ENCODE measurements at regions of chr3 and their contacts with region 1.

Region 1: DNA sequence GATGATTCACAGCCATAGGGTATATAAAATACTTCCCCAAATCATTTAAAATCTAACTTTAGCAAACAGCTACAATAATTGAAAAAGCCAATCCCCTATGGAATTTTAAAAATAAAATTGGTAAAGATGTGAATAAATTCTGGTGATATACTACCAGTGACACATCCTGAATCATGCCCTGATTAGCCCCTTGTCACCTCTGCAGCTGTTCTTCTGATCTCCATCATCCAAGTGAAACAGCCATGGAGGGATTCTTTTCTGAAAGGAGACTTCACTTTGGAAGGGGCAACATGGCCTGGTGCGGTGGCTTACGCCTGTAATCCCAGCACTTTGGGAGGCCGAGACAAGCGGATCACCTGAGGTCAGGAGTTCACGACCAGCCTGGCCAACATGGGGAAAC is 115.6 kb upstream of the MLF1 start:
- DNase-seq: no peak
- H3K4me3 ChIP-seq: no peak overlapping the region
- H3K4me3 Mint-ChIP-seq: no peak overlapping the region
- H3K27ac ChIP-seq: no peak overlapping the region
- H3K27ac Mint-ChIP-seq: no peak overlapping the region
- H3K4me1 ChIP-seq: no peaks in the 10 kb centered on the region
- H3K4me1 Mint-ChIP-seq: no peaks in the 10 kb centered on the region
- H3K27me3 ChIP-seq: no peaks in the 10 kb centered on the region
- H3K27me3 Mint-ChIP-seq: no peaks in the 10 kb centered on the region

Region 2: DNA sequence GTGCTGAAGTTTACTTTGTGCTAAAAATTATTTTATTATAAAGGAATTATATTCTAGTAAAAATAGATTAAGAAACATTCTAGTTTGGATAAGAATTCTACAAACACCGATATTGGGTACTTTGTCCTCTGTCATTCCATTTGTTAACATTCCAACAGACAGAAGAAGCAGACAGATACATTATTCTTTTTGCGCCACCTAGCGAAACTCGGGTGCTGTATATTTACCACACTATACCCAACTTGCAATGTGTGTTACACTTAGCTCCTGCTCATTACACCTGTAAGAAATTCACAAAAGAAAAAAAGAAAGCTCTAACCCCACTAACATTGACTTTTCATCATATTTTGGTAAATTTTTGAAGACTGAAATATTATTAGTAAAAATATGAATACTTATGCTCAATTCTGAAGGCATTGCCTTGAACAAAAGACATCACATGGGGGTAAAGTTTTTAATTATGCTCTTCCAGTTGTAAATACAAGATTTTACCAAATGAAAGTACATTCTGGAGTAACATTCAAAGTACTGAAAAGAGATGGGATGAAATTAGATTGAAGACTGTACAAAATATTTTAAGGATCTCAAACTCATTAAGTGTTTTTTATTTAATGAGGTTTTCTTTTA is 20.9 kb before region 1 on chr3:
- CTCF ChIA-PET with region 1: no interaction called
- POLR2A ChIA-PET with region 1: interaction called, 15 read pairs
- DNase-seq: peak in 1 of 5 donors; percentile 12
- H3K4me3 ChIP-seq: no peak overlapping the region
- H3K4me3 Mint-ChIP-seq: no peak overlapping the region
- H3K27ac ChIP-seq: no peak overlapping the region
- H3K27ac Mint-ChIP-seq: no peak overlapping the region
- H3K4me1 ChIP-seq: no peaks in the 10 kb centered on the region
- H3K4me1 Mint-ChIP-seq: no peaks in the 10 kb centered on the region
- H3K27me3 ChIP-seq: no peaks in the 10 kb centered on the region
- H3K27me3 Mint-ChIP-seq: peaks cover 0 to 1% of the 10 kb centered on the region in 2 donors

Region 3: DNA sequence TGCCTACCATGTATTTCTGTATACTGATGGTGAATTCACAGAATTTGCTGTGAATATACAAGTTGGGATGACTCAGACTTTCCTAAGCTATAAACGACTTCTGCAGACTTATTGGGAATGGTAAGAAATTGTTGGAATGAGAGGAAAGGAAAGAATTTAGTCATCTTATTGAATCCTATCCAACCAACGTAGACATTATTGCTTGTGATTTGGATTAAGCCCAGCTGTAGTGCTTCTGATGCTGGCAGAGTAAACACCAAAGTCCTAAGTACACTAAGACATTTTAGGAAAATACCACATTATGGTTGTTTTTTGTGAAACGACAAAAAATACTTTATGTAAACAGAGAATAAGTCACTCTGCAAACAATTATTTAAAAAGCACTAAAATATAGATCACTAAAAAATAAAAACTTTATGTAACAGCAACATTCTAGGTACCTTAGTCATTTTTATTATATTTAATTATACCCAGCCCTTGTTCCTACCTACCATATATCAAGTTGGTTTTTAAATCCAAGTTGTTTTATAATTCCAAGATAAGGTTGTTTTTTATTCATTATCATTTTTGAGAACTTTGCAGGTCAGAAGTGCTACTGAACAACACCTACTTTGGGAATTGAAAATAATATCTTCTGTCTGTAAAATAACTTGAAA is 16.4 kb after region 1 on chr3:
- CTCF ChIA-PET with region 1: no interaction called
- POLR2A ChIA-PET with region 1: no interaction called
- DNase-seq: no peak
- H3K4me3 ChIP-seq: no peak overlapping the region
- H3K4me3 Mint-ChIP-seq: no peak overlapping the region
- H3K27ac ChIP-seq: no peak overlapping the region
- H3K27ac Mint-ChIP-seq: no peak overlapping the region
- H3K4me1 ChIP-seq: no peaks in the 10 kb centered on the region
- H3K4me1 Mint-ChIP-seq: no peaks in the 10 kb centered on the region
- H3K27me3 ChIP-seq: no peaks in the 10 kb centered on the region
- H3K27me3 Mint-ChIP-seq: no peaks in the 10 kb centered on the region

Region 4: GRCh38 chr3:158494673-158495072 is 39.3 kb after region 1 on chr3:
- CTCF ChIA-PET with region 1: no interaction called
- POLR2A ChIA-PET with region 1: no interaction called
- DNase-seq: no peak
- H3K4me3 ChIP-seq: no peak overlapping the region
- H3K4me3 Mint-ChIP-seq: no peak overlapping the region
- H3K27ac ChIP-seq: no peak overlapping the region
- H3K27ac Mint-ChIP-seq: no peak overlapping the region
- H3K4me1 ChIP-seq: no peaks in the 10 kb centered on the region
- H3K4me1 Mint-ChIP-seq: peaks cover 0 to 4% (median 0%) of the 10 kb centered on the region in 3 donors
- H3K27me3 ChIP-seq: no peaks in the 10 kb centered on the region
- H3K27me3 Mint-ChIP-seq: no peaks in the 10 kb centered on the region

Measured in CD8-positive, alpha-beta memory T cell (primary cell).